ENCODE measurements at regions of chr2 and their contacts with region 1.

Region 1: GRCh38 chr2:239216614-239217273 is 184.1 kb downstream of the HDAC4 start:
- DNase-seq: peak in 2 of 5 donors; percentile 7 to 11
- H3K4me3 ChIP-seq: no peak overlapping the region
- H3K4me3 Mint-ChIP-seq: peak overlapping the region in 7 of 8 donors; percentile 70 to 82 (median 75)
- H3K27ac ChIP-seq: no peak overlapping the region
- H3K27ac Mint-ChIP-seq: peak overlapping the region; percentile 38 to 88 (median 80)
- H3K4me1 ChIP-seq: peaks cover 63% of the 10 kb centered on the region
- H3K4me1 Mint-ChIP-seq: peaks cover 47 to 81% (median 63%) of the 10 kb centered on the region in 4 donors
- H3K27me3 ChIP-seq: no peaks in the 10 kb centered on the region
- H3K27me3 Mint-ChIP-seq: no peaks in the 10 kb centered on the region

Region 2: DNA sequence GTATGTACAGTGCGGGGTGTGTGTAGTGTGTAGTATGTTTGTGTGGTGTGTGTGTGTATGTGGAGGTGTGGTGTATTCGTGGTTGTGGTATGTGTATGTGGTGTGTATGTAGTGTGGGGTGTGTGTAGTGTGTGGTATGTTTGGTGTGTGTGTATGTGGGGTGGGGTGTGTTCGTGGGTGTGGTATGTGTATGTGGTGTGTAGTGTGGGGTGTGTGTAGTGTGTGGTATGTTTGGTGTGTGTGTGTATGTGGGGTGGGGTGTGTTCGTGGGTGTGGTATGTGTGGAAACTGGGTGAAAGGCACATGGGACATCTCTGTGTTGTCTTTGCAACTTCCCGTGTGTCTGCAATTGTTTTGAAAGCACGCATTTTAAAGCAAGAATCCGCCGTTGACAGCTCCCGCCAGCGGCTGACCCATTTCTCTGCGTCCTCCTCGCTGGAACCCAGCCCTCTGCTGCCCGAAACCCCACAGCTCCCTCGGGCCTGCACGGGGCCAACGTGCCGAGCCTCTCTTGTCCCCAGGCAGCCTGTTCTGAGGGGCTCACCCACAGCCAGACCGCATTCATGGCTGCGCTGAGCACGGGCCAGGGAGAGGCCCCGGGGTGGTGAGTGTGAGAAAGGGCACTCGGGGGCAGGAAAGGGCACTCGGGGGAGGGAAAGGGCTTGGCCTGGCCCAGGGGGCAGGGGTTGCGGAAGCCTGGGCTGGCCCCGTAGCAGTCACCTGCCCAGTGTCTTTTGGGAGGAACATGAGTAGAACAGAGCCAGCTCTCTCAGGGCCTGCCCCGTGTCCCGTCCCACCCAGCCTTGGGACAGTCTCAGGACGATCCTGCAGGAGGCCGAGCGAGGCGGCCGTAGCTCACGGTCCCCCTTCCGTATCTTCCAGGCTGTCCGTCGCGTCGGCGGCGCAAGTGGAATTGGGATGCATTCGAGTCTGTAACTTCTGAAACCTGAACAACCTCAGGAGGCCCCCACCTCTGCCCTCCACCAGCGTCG is 307.5 kb before region 1 on chr2:
- CTCF ChIA-PET with region 1: no interaction called
- POLR2A ChIA-PET with region 1: no interaction called
- intact Hi-C with region 1: no loop called
- DNase-seq: no peak
- H3K4me3 ChIP-seq: no peak overlapping the region
- H3K4me3 Mint-ChIP-seq: no peak overlapping the region
- H3K27ac ChIP-seq: no peak overlapping the region
- H3K27ac Mint-ChIP-seq: no peak overlapping the region
- H3K4me1 ChIP-seq: no peaks in the 10 kb centered on the region
- H3K4me1 Mint-ChIP-seq: peaks cover 0 to 2% (median 0%) of the 10 kb centered on the region in 4 donors
- H3K27me3 ChIP-seq: no peaks in the 10 kb centered on the region
- H3K27me3 Mint-ChIP-seq: peaks cover 2 to 3% of the 10 kb centered on the region in 2 donors

Region 3: DNA sequence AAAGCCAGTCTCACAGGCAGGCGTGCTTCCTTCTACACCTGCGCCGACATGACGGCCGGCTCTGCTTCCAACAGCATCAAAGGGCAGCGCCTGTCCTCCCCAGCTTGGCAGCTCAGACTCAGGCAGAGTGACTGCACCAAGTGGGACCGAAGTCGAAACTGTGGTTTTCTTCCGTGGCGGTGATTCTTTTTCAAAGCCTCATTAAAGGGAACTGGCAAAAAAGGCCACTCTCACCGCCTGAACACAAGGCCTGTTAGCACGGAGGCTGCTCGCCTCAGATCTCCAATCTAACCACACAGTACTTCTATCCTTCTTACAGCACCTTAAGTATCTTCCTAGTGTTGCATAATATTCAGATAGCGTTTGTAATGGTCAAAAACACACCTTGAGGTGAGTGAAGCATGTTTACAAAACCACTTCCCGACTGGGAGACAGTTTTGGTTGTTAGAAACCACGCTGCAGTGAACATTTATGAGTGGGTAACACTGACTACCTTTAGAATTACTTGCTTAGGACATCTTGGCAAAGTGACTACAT is 52.3 kb before region 1 on chr2:
- CTCF ChIA-PET with region 1: no interaction called
- POLR2A ChIA-PET with region 1: no interaction called
- intact Hi-C with region 1: loop called (anchors 10 kb)
- DNase-seq: peak in 4 of 5 donors; percentile 45 to 61 (median 56)
- H3K4me3 ChIP-seq: peak overlapping the region in 1 of 2 donors; percentile 20
- H3K4me3 Mint-ChIP-seq: peak overlapping the region; percentile 15 to 77 (median 48)
- H3K27ac ChIP-seq: peak overlapping the region; percentile 10
- H3K27ac Mint-ChIP-seq: peak overlapping the region; percentile 47 to 94 (median 81)
- H3K4me1 ChIP-seq: peaks cover 27% of the 10 kb centered on the region
- H3K4me1 Mint-ChIP-seq: peaks cover 12 to 40% (median 22%) of the 10 kb centered on the region in 4 donors
- H3K27me3 ChIP-seq: no peaks in the 10 kb centered on the region
- H3K27me3 Mint-ChIP-seq: no peaks in the 10 kb centered on the region

Region 4: DNA sequence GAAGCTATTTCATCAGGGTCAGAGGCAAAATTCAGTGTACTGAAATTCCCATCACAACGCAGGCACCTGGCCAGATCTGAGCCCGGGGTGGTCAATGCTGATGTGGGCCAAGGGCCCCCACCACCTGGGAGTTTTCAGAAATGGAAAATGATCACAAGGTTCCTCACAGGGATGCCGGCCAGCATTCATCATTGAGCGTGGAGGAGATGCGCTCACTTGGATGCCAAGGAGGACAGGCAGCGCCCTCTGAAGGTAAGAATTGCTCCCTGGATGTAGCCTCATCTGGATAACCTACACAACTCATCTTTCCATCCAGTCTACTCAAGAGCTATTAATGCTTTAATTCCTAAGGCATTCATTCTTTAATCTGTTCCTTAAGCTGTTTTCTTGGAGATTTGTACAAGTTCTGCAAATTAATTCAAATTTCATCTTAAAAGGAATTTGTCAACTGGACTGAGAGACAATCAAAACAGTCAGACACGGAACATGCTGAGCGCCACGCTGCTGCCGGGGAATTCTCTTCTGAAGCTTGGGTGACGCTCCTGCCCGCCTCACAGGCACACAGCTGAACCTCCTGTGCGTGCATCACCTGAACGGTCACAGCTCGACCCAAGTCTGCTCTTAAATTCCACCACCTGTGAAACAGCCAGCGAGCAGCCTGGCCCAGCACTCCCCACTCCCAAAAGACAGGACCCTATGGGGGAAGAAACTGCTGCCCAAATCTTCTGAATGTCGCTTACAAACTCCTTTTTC is 22.6 kb before region 1 on chr2:
- CTCF ChIA-PET with region 1: no interaction called
- POLR2A ChIA-PET with region 1: no interaction called
- intact Hi-C with region 1: loop called (anchors 1 kb)
- DNase-seq: no peak
- H3K4me3 ChIP-seq: no peak overlapping the region
- H3K4me3 Mint-ChIP-seq: no peak overlapping the region
- H3K27ac ChIP-seq: no peak overlapping the region
- H3K27ac Mint-ChIP-seq: peak overlapping the region in 1 of 7 donors; percentile 31
- H3K4me1 ChIP-seq: no peaks in the 10 kb centered on the region
- H3K4me1 Mint-ChIP-seq: peaks cover 4 to 12% (median 9%) of the 10 kb centered on the region in 4 donors
- H3K27me3 ChIP-seq: no peaks in the 10 kb centered on the region
- H3K27me3 Mint-ChIP-seq: no peaks in the 10 kb centered on the region

Measured in CD4-positive, alpha-beta memory T cell (primary cell).